ENCODE measurements at regions of chr1 and their contacts with region 1.

Region 1: DNA sequence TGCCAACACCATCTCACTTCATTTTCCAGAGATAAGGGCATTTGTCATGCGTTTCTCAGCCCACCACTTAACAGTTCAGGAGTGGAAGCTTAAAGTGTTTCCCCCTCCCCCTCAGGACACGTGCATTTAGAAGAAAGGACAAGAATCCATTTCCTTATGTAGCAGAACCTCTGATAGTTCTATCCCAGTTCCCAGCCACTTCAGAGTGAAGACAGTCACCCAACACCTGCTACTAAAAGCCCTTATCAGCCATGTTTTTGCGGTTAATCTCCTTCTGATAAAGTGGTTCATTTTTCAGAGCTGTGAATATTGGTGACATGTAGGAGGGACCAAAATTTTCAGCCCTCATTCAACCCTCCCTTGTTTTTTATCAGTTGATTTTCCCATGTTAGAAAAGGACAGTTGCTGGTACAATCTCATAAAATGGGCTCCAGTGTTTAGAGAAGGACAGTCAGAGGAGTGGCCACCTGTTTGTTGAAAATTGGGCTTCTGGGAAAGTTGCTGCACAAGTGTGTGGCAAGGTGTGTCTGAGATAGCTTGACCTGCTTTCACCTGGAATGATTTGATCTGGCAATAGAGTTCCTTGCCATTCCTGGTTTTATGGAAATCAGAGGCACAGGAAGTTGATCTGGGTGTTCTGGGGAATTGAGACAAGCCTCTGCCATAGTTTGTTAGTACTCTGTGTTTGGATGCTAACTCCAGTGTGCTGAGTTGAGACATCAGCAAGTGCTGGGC is 114.0 kb downstream of the PPP1R12B start:
- DNase-seq: no peak
- H3K4me3 ChIP-seq: no peak overlapping the region
- H3K4me3 Mint-ChIP-seq: peak overlapping the region in 1 of 2 donors; percentile 24
- H3K27ac ChIP-seq: no peak overlapping the region
- H3K27ac Mint-ChIP-seq: no peak overlapping the region
- H3K4me1 ChIP-seq: no peaks in the 10 kb centered on the region
- H3K4me1 Mint-ChIP-seq: peaks cover 1% of the 10 kb centered on the region
- H3K27me3 ChIP-seq: peaks cover 33 to 43% of the 10 kb centered on the region in 2 donors
- H3K27me3 Mint-ChIP-seq: peaks cover 33 to 52% (median 47%) of the 10 kb centered on the region in 3 donors
- CTCF ChIP-seq: no peak

Region 2: GRCh38 chr1:202405928-202406327 is 56.6 kb before region 1 on chr1:
- intact Hi-C with region 1: no loop called
- DNase-seq: no peak
- H3K4me3 ChIP-seq: no peak overlapping the region
- H3K4me3 Mint-ChIP-seq: no peak overlapping the region
- H3K27ac ChIP-seq: no peak overlapping the region
- H3K27ac Mint-ChIP-seq: no peak overlapping the region
- H3K4me1 ChIP-seq: no peaks in the 10 kb centered on the region
- H3K4me1 Mint-ChIP-seq: peaks cover 10% of the 10 kb centered on the region
- H3K27me3 ChIP-seq: no peaks in the 10 kb centered on the region
- H3K27me3 Mint-ChIP-seq: no peaks in the 10 kb centered on the region
- CTCF ChIP-seq: no peak

Region 3: DNA sequence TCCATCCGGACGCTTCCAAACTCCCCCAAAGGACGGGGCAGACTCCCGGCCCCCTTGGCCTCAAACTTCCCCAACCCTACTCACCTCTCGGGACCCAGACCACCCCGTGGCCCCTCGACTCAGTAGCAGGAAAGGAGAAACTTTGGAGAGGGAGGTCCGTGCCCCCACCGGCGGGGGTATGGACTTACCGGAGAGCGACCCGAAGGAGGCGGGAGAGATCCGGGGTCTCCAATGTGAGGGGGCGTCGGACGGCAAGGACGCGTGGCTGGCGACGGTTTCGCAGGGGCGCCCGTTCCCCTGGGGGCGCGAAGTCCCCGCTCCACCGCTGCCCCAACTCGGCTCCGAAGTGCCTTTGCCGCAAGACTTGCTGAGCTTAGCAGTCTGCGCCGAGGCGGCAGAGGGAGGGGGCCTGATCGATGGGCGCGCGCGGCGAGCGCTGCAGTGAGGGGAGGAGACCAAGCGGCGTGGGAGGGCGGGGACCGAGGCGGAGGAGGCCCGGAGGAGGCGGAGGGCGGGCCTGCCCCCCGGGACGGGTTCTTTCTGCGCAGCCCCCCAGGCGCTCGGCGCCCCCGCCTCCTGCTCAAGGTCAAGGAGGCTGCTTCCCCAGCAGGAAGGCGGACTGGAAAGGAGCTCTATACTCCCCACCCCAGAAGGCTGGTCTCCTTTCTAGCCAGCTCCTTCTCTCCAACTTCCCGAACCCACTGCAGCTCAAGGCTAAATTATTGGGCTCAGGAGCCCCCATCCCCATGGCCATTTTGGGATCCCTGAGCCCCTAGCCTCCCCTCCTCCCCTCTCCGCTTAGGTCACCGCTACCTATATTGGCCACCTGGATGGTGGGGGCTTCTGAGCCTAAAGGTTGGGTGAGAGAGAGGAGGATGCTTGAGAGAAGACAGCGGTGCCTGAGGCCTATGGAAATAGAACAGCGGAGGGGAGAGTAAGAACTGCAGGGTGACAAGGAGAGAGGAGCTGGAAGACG is 247.8 kb after region 1 on chr1 and contains the start of gene SYT2:
- intact Hi-C with region 1: loop called (anchors 5 to 10 kb)
- DNase-seq: no peak
- H3K4me3 ChIP-seq: no peak within 1 kb of the TSS
- H3K4me3 Mint-ChIP-seq: peak within 1 kb of the TSS in 1 of 2 donors; percentile 72
- H3K27ac ChIP-seq: no peak within 1 kb of the TSS
- H3K27ac Mint-ChIP-seq: no peak within 1 kb of the TSS
- H3K4me1 ChIP-seq: no peaks in the 10 kb centered on the region
- H3K4me1 Mint-ChIP-seq: peaks cover 2% of the 10 kb centered on the region
- H3K27me3 ChIP-seq: peaks cover 73 to 95% of the 10 kb centered on the region in 2 donors
- H3K27me3 Mint-ChIP-seq: peaks cover 88 to 95% (median 92%) of the 10 kb centered on the region in 3 donors
- CTCF ChIP-seq: no peak
- polyA plus RNA-seq, gene SYT2: not detected

Region 4: GRCh38 chr1:202716654-202717053 is 254.1 kb after region 1 on chr1:
- intact Hi-C with region 1: loop called (anchors 5 to 10 kb)
- DNase-seq: no peak
- H3K4me3 ChIP-seq: no peak overlapping the region
- H3K4me3 Mint-ChIP-seq: peak overlapping the region in 1 of 2 donors; percentile 17
- H3K27ac ChIP-seq: no peak overlapping the region
- H3K27ac Mint-ChIP-seq: no peak overlapping the region
- H3K4me1 ChIP-seq: no peaks in the 10 kb centered on the region
- H3K4me1 Mint-ChIP-seq: peaks cover 2% of the 10 kb centered on the region
- H3K27me3 ChIP-seq: peaks cover 51 to 72% of the 10 kb centered on the region in 2 donors
- H3K27me3 Mint-ChIP-seq: peaks cover 63 to 87% (median 64%) of the 10 kb centered on the region in 3 donors
- CTCF ChIP-seq: no peak

Region 5: DNA sequence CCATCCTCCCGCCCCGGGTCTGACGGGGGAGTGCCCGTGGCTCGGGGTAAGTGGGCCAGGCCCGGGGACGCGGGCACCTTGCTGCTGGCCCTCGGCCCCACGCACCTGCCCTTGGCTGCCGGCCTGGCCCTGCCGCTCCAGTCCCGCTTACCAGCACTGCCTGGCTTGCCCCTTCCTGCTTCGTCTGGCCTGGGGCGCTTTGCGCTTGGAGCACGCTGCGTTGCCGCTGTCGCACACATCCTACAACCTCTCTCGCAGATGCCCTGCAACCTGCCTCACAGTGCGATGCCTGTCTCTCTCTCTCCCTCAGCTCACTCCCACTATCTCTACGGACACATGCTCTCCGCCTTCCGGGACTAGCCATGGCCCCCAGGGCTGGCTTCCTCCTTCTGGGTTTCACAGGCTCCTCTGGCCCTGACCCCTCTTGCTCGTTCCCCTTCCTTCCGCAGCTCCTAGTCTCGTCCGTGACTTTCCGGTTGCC is 613.6 kb after region 1 on chr1:
- intact Hi-C with region 1: no loop called
- DNase-seq: peak; percentile 35 to 65 (median 52)
- H3K4me3 ChIP-seq: peak overlapping the region; percentile 58 to 84 (median 66)
- H3K4me3 Mint-ChIP-seq: peak overlapping the region; percentile 98 to 100
- H3K27ac ChIP-seq: peak overlapping the region; percentile 10 to 14
- H3K27ac Mint-ChIP-seq: peak overlapping the region in 5 of 7 donors; percentile 40 to 86 (median 71)
- H3K4me1 ChIP-seq: peaks cover 19 to 27% of the 10 kb centered on the region in 2 donors
- H3K4me1 Mint-ChIP-seq: peaks cover 35% of the 10 kb centered on the region
- H3K27me3 ChIP-seq: no peaks in the 10 kb centered on the region
- H3K27me3 Mint-ChIP-seq: peaks cover 0 to 8% (median 6%) of the 10 kb centered on the region in 3 donors
- CTCF ChIP-seq: no peak